K562 (cell line): ENCODE measurements at regions of chr19 and their contacts with region 1.

Region 1: DNA sequence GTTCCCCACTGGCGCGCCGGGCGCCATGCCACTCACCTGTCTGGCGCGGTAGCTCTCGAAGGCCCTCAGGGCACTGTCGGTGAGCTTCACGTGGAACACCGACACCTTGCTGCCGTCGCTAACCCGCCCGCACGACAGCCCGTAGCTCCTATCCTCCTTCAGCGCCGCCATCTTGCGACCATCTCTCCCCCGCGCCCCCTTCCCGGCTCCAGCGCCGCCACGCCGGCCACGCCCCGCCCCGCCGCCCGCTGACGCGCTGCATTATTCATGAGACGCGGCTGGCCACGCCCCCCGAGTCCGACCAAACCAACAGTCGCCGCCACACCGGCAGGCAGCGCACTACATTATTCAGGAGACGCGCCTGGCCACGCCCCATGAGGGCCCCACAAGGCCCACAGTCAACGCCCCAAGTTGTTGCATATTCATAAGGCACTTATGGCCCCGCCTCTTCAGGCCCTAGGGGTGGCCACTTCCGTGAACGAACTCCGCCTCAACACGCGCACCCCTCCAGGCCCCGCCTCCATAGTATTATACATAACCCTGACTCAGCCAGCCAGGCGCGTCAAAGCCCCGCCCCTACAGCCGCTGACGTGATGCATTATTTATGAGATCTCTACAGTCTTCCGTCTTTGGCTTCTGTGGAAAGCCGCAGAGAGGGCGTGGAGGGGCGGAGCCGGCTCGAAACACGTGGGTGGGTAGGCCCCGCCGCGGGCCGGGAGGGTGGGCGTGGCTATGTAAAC is at the start of gene ELL:
- DNase-seq: peak; percentile 95 to 100 (median 96)
- ATAC-seq: peak; percentile 93
- H3K4me3 ChIP-seq: peak within 1 kb of the TSS; percentile 95
- H3K27ac ChIP-seq: peak within 1 kb of the TSS; percentile 97
- H3K4me1 ChIP-seq: peaks cover 11 to 34% of the 10 kb centered on the region in 2 experiments
- H3K27me3 ChIP-seq: no peaks in the 10 kb centered on the region
- CTCF ChIP-seq: peak in 1 of 3 experiments; percentile 22; a peak in 1 of 6 replicates
- EP300 ChIP-seq: no peak
- POLR2A ChIP-seq: peak; percentile 92
- RAD21 ChIP-seq: no peak
- polyA plus RNA-seq, gene ELL: 0.24 to 0.45 TPM

Region 2: GRCh38 chr19:18488838-18489626 is 33.0 kb before region 1 on chr19:
- CTCF ChIA-PET with region 1: no interaction called
- POLR2A ChIA-PET with region 1: interaction called, 5 read pairs
- in situ Hi-C with region 1: no loop called
- intact Hi-C with region 1: loop called (anchors 2 kb)
- DNase-seq: peak; percentile 55 to 68 (median 63)
- ATAC-seq: peak; percentile 69
- H3K4me3 ChIP-seq: no peak overlapping the region
- H3K27ac ChIP-seq: no peak overlapping the region
- H3K4me1 ChIP-seq: peaks cover 33 to 68% of the 10 kb centered on the region in 2 experiments
- H3K27me3 ChIP-seq: no peaks in the 10 kb centered on the region
- CTCF ChIP-seq: peak; percentile 59 to 67 (median 60)
- EP300 ChIP-seq: no peak
- POLR2A ChIP-seq: no peak
- RAD21 ChIP-seq: peak in 1 of 2 experiments; percentile 45; a peak in 3 of 4 replicates

Region 3: GRCh38 chr19:18503971-18504885 is 17.8 kb before region 1 on chr19:
- CTCF ChIA-PET with region 1: no interaction called
- POLR2A ChIA-PET with region 1: interaction called, 84 read pairs
- in situ Hi-C with region 1: no loop called
- intact Hi-C with region 1: no loop called
- DNase-seq: no peak
- ATAC-seq: no peak
- H3K4me3 ChIP-seq: no peak overlapping the region
- H3K27ac ChIP-seq: no peak overlapping the region
- H3K4me1 ChIP-seq: peaks cover 22 to 66% of the 10 kb centered on the region in 2 experiments
- H3K27me3 ChIP-seq: no peaks in the 10 kb centered on the region
- CTCF ChIP-seq: no peak
- EP300 ChIP-seq: no peak
- POLR2A ChIP-seq: no peak
- RAD21 ChIP-seq: no peak

Region 4: DNA sequence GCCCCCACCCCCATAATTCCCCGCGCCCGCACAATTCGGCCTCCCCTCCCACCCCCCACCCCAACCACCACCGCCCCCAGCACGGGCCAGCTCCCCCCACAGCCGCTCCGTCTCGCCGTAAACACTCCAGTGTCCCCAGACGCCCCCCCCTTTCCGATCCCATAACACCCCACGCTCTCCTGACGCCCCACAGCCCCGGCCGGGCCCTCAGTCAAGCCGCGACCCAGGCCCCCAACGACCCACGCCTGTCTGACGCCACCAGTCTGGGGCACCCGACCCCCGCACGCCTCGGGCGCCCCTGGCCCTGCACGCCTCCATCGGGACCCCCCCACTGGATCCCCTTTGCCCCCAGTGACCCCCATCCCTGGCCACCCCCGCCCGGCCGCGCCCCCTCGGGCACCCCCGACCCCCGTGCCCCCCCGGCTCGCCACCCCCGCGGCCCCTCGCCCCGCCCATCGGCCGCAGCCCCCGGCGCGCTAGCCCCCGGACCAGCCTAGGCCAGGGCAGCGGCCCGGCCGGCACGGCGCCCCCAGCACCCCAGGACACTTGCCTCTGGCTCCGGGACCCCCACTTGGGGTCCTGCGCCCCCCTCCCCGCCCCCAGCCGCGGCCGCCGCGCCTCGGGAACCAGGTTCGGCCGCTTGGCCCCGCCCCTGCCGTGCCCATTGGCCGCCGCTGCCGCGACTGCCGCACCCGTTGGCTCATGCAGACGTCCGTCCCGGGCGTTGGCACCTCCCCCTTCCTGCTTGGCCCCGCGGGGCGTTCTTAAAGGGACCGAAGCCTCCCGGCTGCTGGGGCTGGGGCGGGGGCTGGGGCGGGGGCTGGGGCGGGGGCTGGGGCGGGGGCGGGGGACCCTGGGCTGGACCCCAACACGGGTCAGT is 21.1 kb after region 1 on chr19 and contains the start of gene FKBP8:
- CTCF ChIA-PET with region 1: no interaction called
- POLR2A ChIA-PET with region 1: interaction called, 11 read pairs
- in situ Hi-C with region 1: no loop called
- intact Hi-C with region 1: loop called (anchors 2 kb)
- DNase-seq: peak; percentile 94 to 97 (median 96)
- ATAC-seq: peak; percentile 97
- H3K4me3 ChIP-seq: peak within 1 kb of the TSS; percentile 68
- H3K27ac ChIP-seq: peak within 1 kb of the TSS; percentile 88
- H3K4me1 ChIP-seq: peaks cover 18 to 38% of the 10 kb centered on the region in 2 experiments
- H3K27me3 ChIP-seq: no peaks in the 10 kb centered on the region
- CTCF ChIP-seq: no peak
- EP300 ChIP-seq: no peak
- POLR2A ChIP-seq: no peak
- RAD21 ChIP-seq: no peak
- polyA plus RNA-seq, gene FKBP8: 0.46 to 1.0 TPM

Region 5: GRCh38 chr19:18557474-18558201 is 35.6 kb after region 1 on chr19 and contains the start of gene KXD1:
- CTCF ChIA-PET with region 1: no interaction called
- POLR2A ChIA-PET with region 1: interaction called, 5 read pairs
- in situ Hi-C with region 1: no loop called
- intact Hi-C with region 1: loop called (anchors 5 kb)
- DNase-seq: peak; percentile 87 to 100 (median 95)
- ATAC-seq: peak; percentile 98
- H3K4me3 ChIP-seq: peak within 1 kb of the TSS; percentile 77
- H3K27ac ChIP-seq: peak within 1 kb of the TSS; percentile 81
- H3K4me1 ChIP-seq: peaks cover 8 to 23% of the 10 kb centered on the region in 2 experiments; a peak in 4 of 5 replicates
- H3K27me3 ChIP-seq: no peaks in the 10 kb centered on the region
- CTCF ChIP-seq: no peak
- EP300 ChIP-seq: no peak
- POLR2A ChIP-seq: peak; percentile 80
- RAD21 ChIP-seq: no peak
- polyA plus RNA-seq, gene KXD1: 21.9 to 41.3 TPM

Region 6: DNA sequence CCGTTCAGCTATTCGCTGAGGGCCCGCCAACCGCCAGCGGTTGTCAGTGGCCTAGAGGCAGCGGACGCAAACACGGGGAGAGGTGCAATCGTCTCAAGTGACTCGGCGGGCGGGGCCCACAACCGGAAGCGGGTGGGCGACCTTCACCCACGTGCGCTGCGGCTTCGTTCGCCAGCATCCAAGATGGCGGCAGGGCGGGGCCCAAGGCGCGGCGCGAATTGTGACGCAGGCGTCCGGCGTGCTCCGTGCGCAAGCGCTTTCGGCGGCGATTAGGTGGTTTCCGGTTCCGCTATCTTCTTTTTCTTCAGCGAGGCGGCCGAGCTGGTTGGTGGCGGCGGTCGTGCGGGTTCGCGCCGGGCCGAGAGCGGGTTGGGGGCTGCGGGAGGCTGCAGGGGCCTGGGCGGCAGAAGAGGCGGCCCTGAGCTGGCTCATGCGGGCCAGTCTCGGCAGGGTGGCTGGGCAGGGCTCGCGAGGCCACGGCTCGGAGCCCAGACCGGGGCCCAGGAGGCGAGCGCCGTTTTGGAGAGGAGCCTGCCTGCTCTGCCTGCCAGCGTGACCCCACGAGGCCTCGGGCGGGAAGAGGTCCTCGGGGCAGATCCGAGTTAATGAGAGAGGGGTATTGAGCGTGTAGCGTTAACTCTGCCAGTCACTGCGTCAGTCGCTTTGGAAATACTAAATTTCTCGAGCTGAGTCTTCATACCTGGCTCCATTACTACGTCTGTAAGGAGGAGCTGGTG is 49.7 kb after region 1 on chr19 and contains the start of gene UBA52:
- CTCF ChIA-PET with region 1: no interaction called
- POLR2A ChIA-PET with region 1: interaction called, 4 read pairs
- in situ Hi-C with region 1: no loop called
- intact Hi-C with region 1: loop called (anchors 5 kb)
- DNase-seq: peak; percentile 90 to 99 (median 92)
- ATAC-seq: peak; percentile 98
- H3K4me3 ChIP-seq: peak within 1 kb of the TSS; percentile 99
- H3K27ac ChIP-seq: peak within 1 kb of the TSS; percentile 90
- H3K4me1 ChIP-seq: peaks cover 12 to 42% of the 10 kb centered on the region in 2 experiments; a peak in 4 of 5 replicates
- H3K27me3 ChIP-seq: no peaks in the 10 kb centered on the region; a peak in 1 of 5 replicates
- CTCF ChIP-seq: peak in 2 of 3 experiments; percentile 1 to 4; a peak in 1 of 6 replicates
- EP300 ChIP-seq: peak; percentile 48; the same call in 1 of the 2 replicates
- POLR2A ChIP-seq: peak; percentile 98
- RAD21 ChIP-seq: no peak
- polyA plus RNA-seq, gene UBA52: 2,213 to 2,563 TPM